MCF 10A (cell line): ENCODE measurements at regions of chr1 and their contacts with region 1.

Region 1: DNA sequence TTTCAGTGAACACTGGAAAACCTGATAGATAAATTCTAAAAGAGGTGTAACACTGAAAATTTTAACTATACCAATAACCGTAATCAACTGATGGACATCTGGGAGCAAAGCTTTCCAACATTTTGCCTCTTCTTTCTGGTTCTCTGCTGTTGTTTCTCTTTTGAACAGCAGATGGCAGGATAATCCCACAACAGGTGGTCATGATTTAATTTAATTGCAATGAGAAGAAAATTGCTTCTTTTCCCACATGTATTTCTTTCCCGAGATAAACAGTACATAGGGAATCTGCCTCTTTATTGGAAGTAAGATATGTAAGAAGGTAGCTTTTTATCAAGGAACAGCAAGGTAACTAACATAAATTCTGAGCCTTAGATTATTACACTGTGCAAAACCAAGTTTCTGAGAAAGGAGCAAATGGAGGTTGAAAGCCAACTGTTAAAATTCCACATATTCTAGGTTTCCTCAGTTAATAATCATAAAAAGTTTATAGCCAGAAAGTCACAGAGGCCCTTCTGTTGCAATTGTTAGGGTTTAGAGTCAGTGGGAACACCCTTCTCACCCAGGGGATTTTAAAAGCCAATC is 72.9 kb downstream of the RPS6KA1 start:
- DNase-seq: peak; percentile 77
- H3K4me3 Mint-ChIP-seq: no peak overlapping the region
- H3K27ac Mint-ChIP-seq: no peak overlapping the region
- H3K4me1 Mint-ChIP-seq: no peaks in the 10 kb centered on the region
- H3K27me3 Mint-ChIP-seq: peaks cover 28% of the 10 kb centered on the region
- CTCF ChIP-seq: peak; percentile 77

Region 2: GRCh38 chr1:26614655-26615411 is 12.4 kb after region 1 on chr1:
- CTCF ChIA-PET with region 1: interaction called, 10 read pairs
- POLR2A ChIA-PET with region 1: interaction called, 3 read pairs
- intact Hi-C with region 1: no loop called
- DNase-seq: no peak
- H3K4me3 Mint-ChIP-seq: no peak overlapping the region
- H3K27ac Mint-ChIP-seq: no peak overlapping the region
- H3K4me1 Mint-ChIP-seq: peaks cover 7% of the 10 kb centered on the region
- H3K27me3 Mint-ChIP-seq: no peaks in the 10 kb centered on the region
- CTCF ChIP-seq: no peak

Region 3: GRCh38 chr1:26717017-26717491 is 114.6 kb after region 1 on chr1:
- CTCF ChIA-PET with region 1: interaction called, 9 read pairs
- POLR2A ChIA-PET with region 1: interaction called, 3 read pairs
- intact Hi-C with region 1: loop called (anchors 1 kb)
- DNase-seq: peak; percentile 45
- H3K4me3 Mint-ChIP-seq: no peak overlapping the region
- H3K27ac Mint-ChIP-seq: peak overlapping the region; percentile 67
- H3K4me1 Mint-ChIP-seq: peaks cover 8% of the 10 kb centered on the region
- H3K27me3 Mint-ChIP-seq: no peaks in the 10 kb centered on the region
- CTCF ChIP-seq: no peak

Region 4: DNA sequence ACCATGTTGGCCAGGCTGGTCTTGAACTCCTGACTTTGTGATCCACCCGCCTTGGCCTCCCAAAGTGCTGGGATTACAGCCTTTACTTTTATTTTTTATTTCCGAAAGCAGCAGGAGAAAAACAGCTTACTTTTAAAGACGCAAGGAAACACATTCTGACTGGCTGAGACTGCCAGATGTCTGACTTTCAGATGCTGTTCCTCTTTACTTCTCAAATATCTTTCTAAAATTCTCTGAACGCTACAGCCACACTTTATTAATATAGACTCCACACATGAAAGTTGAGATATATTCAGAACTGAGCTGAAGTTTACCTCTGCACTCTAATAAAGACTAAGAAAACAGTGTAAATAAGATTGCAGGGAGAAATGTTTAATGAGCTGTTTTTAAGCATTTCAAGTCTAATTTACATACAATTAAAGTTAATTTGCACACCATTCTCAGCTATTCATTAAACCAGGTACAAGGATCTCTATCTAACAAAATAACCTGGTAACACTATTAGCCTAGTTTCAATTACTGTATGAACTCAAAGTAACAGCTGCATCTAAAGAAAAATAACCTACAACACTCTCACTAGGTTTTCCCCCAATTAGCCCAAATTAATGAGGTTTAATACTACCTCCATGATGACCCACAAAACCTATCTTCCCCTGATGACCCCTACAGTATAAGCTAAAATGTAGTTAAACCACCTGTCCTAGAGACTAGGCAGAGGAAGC is 862.6 kb after region 1 on chr1:
- CTCF ChIA-PET with region 1: no interaction called
- POLR2A ChIA-PET with region 1: no interaction called
- intact Hi-C with region 1: no loop called
- DNase-seq: no peak
- H3K4me3 Mint-ChIP-seq: no peak overlapping the region
- H3K27ac Mint-ChIP-seq: no peak overlapping the region
- H3K4me1 Mint-ChIP-seq: peaks cover 5% of the 10 kb centered on the region
- H3K27me3 Mint-ChIP-seq: no peaks in the 10 kb centered on the region
- CTCF ChIP-seq: no peak